Ovary (tissue), 10 donors: ENCODE measurements at regions of chr5 and their contacts with region 1.

Region 1: DNA sequence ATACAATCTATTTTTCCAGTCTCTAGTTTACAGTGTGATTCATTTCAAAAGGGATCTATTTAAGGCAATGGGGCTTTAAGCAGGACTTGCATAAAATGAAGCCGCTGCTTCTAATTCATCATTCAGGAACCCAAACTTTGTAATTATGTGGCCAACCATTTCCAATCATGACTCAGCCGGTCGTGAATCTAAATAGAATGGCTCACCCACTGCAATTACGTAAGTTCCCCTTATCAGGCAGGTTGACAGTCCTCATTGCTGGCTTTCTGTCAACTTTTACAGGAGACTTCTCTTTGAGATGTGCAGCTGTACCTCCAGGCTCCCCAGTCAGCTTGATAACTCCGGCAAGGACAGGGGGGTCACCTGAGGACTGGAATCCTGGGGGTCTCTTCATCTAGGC is 152.8 kb upstream of the DAP start:
- DNase-seq: no peak
- H3K4me3 ChIP-seq: no peak overlapping the region
- H3K27ac ChIP-seq: no peak overlapping the region
- H3K4me1 ChIP-seq: no peaks in the 10 kb centered on the region
- H3K27me3 ChIP-seq: no peaks in the 10 kb centered on the region
- CTCF ChIP-seq: no peak
- EP300 ChIP-seq: no peak
- POLR2A ChIP-seq: no peak

Region 2: GRCh38 chr5:10949856-10950628 is 36.2 kb after region 1 on chr5:
- intact Hi-C with region 1: loop called in 1 of 4 experiments (anchors 2 kb)
- DNase-seq: no peak
- H3K4me3 ChIP-seq: no peak overlapping the region
- H3K27ac ChIP-seq: no peak overlapping the region
- H3K4me1 ChIP-seq: no peaks in the 10 kb centered on the region
- H3K27me3 ChIP-seq: no peaks in the 10 kb centered on the region
- CTCF ChIP-seq: no peak
- EP300 ChIP-seq: no peak
- POLR2A ChIP-seq: no peak